ENCODE measurements at regions of chr7 and their contacts with region 1.

Region 1: DNA sequence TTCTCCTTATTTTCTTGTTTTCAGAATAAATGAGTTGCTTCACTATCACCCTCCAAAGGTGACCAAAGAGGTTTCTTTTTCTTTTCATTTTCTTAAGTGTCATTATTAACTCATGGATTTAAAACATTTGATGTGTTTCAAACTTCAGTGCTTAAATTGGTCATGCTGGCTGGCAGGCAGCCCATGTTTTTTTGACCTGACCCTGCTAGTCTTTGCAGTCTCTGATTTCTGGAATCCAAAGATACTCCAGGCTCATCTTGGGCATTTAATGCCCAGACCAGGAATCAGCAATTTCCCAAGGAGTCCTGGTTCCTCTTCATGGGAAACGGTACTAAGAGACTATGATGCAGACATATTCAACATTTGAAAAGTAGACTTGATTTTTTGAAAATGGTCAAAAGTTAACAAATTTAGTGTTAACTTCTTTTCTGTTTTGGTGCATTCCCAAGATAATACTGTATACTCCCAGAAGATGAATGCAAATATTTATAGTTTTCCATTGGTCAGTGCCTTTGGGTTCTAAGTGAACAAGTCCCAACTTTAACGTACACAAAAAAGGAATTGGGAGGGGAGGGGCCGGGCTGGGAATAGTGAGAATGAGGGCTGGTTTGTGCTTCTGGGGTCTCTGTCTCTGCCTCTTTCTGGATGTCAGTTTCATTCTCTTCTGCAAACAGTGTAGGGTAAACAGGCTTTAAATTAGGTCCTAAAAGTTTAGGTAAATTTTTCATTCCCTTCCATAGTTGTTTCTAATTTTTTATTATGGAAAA is 19.8 kb downstream of the NUB1 start:
- DNase-seq: no peak

Region 2: GRCh38 chr7:151453326-151453791 is 92.0 kb after region 1 on chr7:
- intact Hi-C with region 1: loop called (anchors 5 kb)
- DNase-seq: peak in 7 of 42 donors; percentile 0 to 39 (median 19)

Region 3: GRCh38 chr7:151558575-151558974 is 197.2 kb after region 1 on chr7:
- intact Hi-C with region 1: no loop called
- DNase-seq: no peak